ENCODE measurements at regions of chr12 and their contacts with region 1.

Region 1: GRCh38 chr12:64392221-64392620 is 1.7 kb upstream of the C12orf56 start:
- DNase-seq: peak; percentile 58
- H3K4me3 Mint-ChIP-seq: no peak overlapping the region
- H3K27ac Mint-ChIP-seq: no peak overlapping the region
- H3K4me1 Mint-ChIP-seq: peaks cover 4% of the 10 kb centered on the region
- H3K27me3 Mint-ChIP-seq: no peaks in the 10 kb centered on the region
- CTCF ChIP-seq: peak; percentile 36

Region 2: GRCh38 chr12:63826006-63826585 is 566.1 kb before region 1 on chr12:
- CTCF ChIA-PET with region 1: interaction called, 6 read pairs
- POLR2A ChIA-PET with region 1: no interaction called
- intact Hi-C with region 1: loop called (anchors 2 kb)
- DNase-seq: peak; percentile 76
- H3K4me3 Mint-ChIP-seq: no peak overlapping the region
- H3K27ac Mint-ChIP-seq: no peak overlapping the region
- H3K4me1 Mint-ChIP-seq: peaks cover 8% of the 10 kb centered on the region
- H3K27me3 Mint-ChIP-seq: no peaks in the 10 kb centered on the region
- CTCF ChIP-seq: peak; percentile 75

Region 3: GRCh38 chr12:64273527-64274403 is 118.5 kb before region 1 on chr12:
- CTCF ChIA-PET with region 1: interaction called, 4 read pairs
- POLR2A ChIA-PET with region 1: no interaction called
- intact Hi-C with region 1: loop called (anchors 2 kb)
- DNase-seq: peak; percentile 47
- H3K4me3 Mint-ChIP-seq: no peak overlapping the region
- H3K27ac Mint-ChIP-seq: no peak overlapping the region
- H3K4me1 Mint-ChIP-seq: no peaks in the 10 kb centered on the region
- H3K27me3 Mint-ChIP-seq: no peaks in the 10 kb centered on the region
- CTCF ChIP-seq: peak; percentile 45

Region 4: GRCh38 chr12:64362721-64363300 is 29.4 kb before region 1 on chr12:
- CTCF ChIA-PET with region 1: no interaction called
- POLR2A ChIA-PET with region 1: no interaction called
- intact Hi-C with region 1: no loop called
- DNase-seq: no peak
- H3K4me3 Mint-ChIP-seq: no peak overlapping the region
- H3K27ac Mint-ChIP-seq: no peak overlapping the region
- H3K4me1 Mint-ChIP-seq: no peaks in the 10 kb centered on the region
- H3K27me3 Mint-ChIP-seq: no peaks in the 10 kb centered on the region
- CTCF ChIP-seq: no peak